Endothelial cell of umbilical vein (primary cell): ENCODE measurements at regions of chr1 and their contacts with region 1.

Region 1: GRCh38 chr1:207963427-207964194 is 52.7 kb upstream of the CD34 start:
- DNase-seq: peak; percentile 94
- H3K4me3 ChIP-seq: peak overlapping the region in 2 of 3 experiments; percentile 1 to 17
- H3K27ac ChIP-seq: peak overlapping the region; percentile 81
- H3K4me1 ChIP-seq: peaks cover 29% of the 10 kb centered on the region
- H3K27me3 ChIP-seq: no peaks in the 10 kb centered on the region
- CTCF ChIP-seq: peak; percentile 92 to 99
- POLR2A ChIP-seq: peak; percentile 59

Region 2: DNA sequence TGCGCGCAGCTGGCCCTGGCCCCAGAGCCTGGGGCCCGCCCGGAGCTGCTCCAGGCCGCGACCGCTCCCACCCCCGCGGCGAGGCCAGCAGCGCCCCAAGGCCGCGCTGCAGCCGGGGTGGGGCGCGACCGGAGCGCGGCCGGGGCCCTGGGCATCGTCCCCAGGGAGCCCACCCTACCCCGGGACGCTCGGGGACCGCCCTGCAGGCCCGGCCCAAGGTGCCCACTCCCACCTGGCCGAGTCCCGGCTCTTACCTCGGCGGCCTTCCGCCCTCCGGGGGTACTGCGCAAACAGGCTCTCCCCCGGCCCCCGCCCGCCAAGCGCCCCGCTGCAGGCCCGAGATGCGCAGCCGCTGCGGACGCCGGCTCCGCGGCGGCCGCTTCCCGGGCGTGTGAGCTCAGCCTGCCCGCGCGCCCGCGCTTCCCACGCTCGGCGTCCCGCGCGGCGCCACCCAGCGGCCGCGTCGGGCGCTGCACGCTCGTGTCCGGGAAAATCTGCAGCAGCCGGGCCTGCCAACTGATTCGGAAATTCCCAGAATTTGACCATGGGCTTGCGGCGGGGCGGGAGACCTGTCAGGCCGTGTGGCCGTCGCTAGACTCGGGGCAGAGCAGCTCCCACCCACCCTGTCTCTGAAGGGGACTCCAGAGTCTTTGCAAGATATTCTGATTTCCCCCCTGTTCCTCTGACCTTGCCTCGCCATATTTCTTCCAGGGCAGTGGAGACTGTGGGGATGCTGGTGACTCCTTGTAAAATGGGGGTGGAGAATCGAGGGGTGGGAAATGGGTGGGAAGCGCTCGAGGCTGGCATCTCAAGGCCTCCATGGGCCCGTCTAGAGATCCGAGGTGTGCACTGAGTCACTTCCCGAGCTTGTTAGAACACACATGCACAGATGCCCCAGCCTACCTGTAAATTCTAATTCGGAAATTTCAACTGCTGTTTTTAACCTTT is 94.6 kb before region 1 on chr1:
- CTCF ChIA-PET with region 1: interaction called, 28 read pairs
- POLR2A ChIA-PET with region 1: no interaction called
- dilution Hi-C with region 1: no loop called
- intact Hi-C with region 1: no loop called
- DNase-seq: peak; percentile 83
- H3K4me3 ChIP-seq: peak overlapping the region; percentile 64 to 67 (median 65)
- H3K27ac ChIP-seq: peak overlapping the region; percentile 52
- H3K4me1 ChIP-seq: peaks cover 17% of the 10 kb centered on the region
- H3K27me3 ChIP-seq: no peaks in the 10 kb centered on the region
- CTCF ChIP-seq: peak; percentile 73 to 95
- POLR2A ChIP-seq: peak; percentile 59

Region 3: GRCh38 chr1:207903767-207904166 is 59.8 kb before region 1 on chr1:
- CTCF ChIA-PET with region 1: interaction called, 301 read pairs
- POLR2A ChIA-PET with region 1: interaction called, 3 read pairs
- dilution Hi-C with region 1: no loop called
- intact Hi-C with region 1: loop called (anchors 1 kb)
- DNase-seq: no peak
- H3K4me3 ChIP-seq: no peak overlapping the region
- H3K27ac ChIP-seq: no peak overlapping the region
- H3K4me1 ChIP-seq: peaks cover 4% of the 10 kb centered on the region
- H3K27me3 ChIP-seq: no peaks in the 10 kb centered on the region
- CTCF ChIP-seq: no peak
- POLR2A ChIP-seq: no peak

Region 4: DNA sequence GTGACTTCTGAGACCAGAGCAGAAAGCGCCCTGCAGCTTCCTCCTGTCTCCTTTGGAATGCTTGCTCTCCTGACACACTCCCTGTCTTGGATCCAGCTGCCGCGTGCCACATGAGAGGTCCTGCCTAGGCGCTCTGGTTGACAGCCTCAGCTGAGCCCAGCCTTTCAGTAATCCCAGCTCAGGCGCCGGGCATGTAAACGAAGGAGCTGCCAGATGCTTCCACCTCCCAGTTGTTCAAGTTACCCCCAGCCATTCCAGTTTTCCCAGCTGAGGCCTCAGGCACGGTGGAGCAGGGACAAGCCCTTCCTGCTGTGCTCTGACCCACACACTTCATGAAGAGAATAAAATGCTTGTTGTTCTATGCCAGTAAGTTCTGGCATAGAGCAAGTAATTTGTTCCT is 38.4 kb before region 1 on chr1:
- CTCF ChIA-PET with region 1: interaction called, 50 read pairs
- POLR2A ChIA-PET with region 1: interaction called, 3 read pairs
- dilution Hi-C with region 1: no loop called
- intact Hi-C with region 1: loop called (anchors 1 kb)
- DNase-seq: peak; percentile 88
- H3K4me3 ChIP-seq: no peak overlapping the region
- H3K27ac ChIP-seq: no peak overlapping the region
- H3K4me1 ChIP-seq: peaks cover 33% of the 10 kb centered on the region
- H3K27me3 ChIP-seq: no peaks in the 10 kb centered on the region
- CTCF ChIP-seq: no peak
- POLR2A ChIP-seq: no peak

Region 5: DNA sequence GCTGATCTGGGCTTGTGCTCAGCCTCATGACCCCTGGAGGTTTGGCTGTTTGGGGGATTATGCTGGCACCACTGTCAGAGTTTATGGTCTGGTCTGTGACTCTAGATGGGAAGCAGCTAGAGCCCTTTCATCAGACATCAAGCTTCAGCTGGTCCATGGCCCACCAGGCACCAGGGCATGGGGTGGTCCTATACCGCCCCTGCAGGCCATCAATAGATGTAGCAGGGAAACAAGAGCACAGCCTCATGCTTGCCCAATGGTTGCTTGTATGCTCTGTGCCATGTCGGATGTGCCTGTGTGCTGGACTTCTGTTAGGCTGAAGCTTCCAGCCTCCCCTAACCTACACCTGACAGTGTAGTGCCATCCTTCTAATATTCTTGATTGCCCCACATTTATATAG is 18.4 kb after region 1 on chr1:
- CTCF ChIA-PET with region 1: interaction called, 15 read pairs
- POLR2A ChIA-PET with region 1: no interaction called
- dilution Hi-C with region 1: no loop called
- intact Hi-C with region 1: no loop called
- DNase-seq: peak; percentile 25
- H3K4me3 ChIP-seq: no peak overlapping the region
- H3K27ac ChIP-seq: no peak overlapping the region
- H3K4me1 ChIP-seq: no peaks in the 10 kb centered on the region
- H3K27me3 ChIP-seq: peaks cover 17 to 24% of the 10 kb centered on the region in 2 experiments
- CTCF ChIP-seq: peak; percentile 60 to 68
- POLR2A ChIP-seq: no peak